ENCODE measurements at regions of chr1 and their contacts with region 1.

Region 1: GRCh38 chr1:180863158-180863775 is 49.4 kb upstream of the KIAA1614 start:
- DNase-seq: peak in 4 of 9 experiments; percentile 11 to 63 (median 42)
- ATAC-seq: no peak
- H3K4me3 ChIP-seq: no peak overlapping the region
- H3K4me3 Mint-ChIP-seq: no peak overlapping the region
- H3K27ac ChIP-seq: no peak overlapping the region
- H3K27ac Mint-ChIP-seq: no peak overlapping the region
- H3K4me1 ChIP-seq: no peaks in the 10 kb centered on the region
- H3K4me1 Mint-ChIP-seq: no peaks in the 10 kb centered on the region
- H3K27me3 ChIP-seq: no peaks in the 10 kb centered on the region
- H3K27me3 Mint-ChIP-seq: no peaks in the 10 kb centered on the region
- CTCF ChIP-seq: peak; percentile 93

Region 2: GRCh38 chr1:180527101-180527669 is 336.1 kb before region 1 on chr1:
- CTCF ChIA-PET with region 1: interaction called, 65 read pairs
- POLR2A ChIA-PET with region 1: no interaction called
- intact Hi-C with region 1: no loop called
- DNase-seq: no peak
- ATAC-seq: no peak
- H3K4me3 ChIP-seq: no peak overlapping the region
- H3K4me3 Mint-ChIP-seq: no peak overlapping the region
- H3K27ac ChIP-seq: no peak overlapping the region
- H3K27ac Mint-ChIP-seq: no peak overlapping the region
- H3K4me1 ChIP-seq: no peaks in the 10 kb centered on the region
- H3K4me1 Mint-ChIP-seq: no peaks in the 10 kb centered on the region
- H3K27me3 ChIP-seq: no peaks in the 10 kb centered on the region
- H3K27me3 Mint-ChIP-seq: no peaks in the 10 kb centered on the region
- CTCF ChIP-seq: no peak

Region 3: GRCh38 chr1:180533266-180533987 is 329.8 kb before region 1 on chr1:
- CTCF ChIA-PET with region 1: interaction called, 65 read pairs
- POLR2A ChIA-PET with region 1: no interaction called
- intact Hi-C with region 1: loop called (anchors 1 kb)
- DNase-seq: peak; percentile 13 to 71 (median 60)
- ATAC-seq: peak; percentile 71
- H3K4me3 ChIP-seq: no peak overlapping the region
- H3K4me3 Mint-ChIP-seq: no peak overlapping the region
- H3K27ac ChIP-seq: no peak overlapping the region
- H3K27ac Mint-ChIP-seq: no peak overlapping the region
- H3K4me1 ChIP-seq: no peaks in the 10 kb centered on the region
- H3K4me1 Mint-ChIP-seq: no peaks in the 10 kb centered on the region
- H3K27me3 ChIP-seq: no peaks in the 10 kb centered on the region
- H3K27me3 Mint-ChIP-seq: peaks cover 7% of the 10 kb centered on the region
- CTCF ChIP-seq: peak; percentile 59

Region 4: DNA sequence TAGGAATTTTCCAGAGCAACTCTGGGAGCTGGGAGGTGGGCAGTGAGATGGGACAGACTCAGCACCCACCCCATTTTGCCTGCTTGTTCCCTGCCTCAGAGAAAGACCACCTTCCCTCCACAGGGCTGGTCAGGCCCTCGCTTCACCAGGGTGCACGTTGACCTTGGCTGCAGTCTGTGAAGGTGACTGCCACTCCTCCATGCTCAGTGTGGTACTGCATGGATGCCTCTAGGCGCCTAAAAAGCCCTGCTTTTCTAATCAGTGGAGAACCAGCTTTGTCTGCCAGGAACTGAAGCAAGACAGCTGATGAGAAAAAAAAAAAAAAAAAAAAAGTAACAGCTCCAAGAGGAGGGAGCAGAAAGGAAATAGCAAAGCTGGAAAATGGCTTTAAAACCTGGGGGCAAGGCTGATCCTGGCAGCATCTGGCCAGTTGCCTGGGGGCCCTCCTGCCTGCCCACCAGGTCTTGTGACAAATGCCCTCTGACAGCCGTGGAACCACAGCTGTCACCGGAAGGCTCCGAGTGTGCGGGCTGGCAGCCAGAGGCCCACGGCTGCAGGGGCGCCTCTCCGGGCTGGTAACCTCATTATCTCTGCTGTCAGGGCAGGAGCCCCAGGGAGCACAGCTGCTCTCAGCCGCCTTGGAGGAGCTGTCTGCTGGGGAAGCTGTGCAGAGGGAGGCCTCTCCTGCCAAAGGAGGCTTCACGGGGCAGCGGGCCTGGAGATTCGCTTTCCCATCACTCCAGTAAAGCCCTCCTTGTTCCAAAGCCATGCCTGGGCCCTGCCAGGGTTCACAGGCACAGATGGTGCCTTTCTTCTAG is 63.1 kb after region 1 on chr1:
- CTCF ChIA-PET with region 1: no interaction called
- POLR2A ChIA-PET with region 1: no interaction called
- intact Hi-C with region 1: no loop called
- DNase-seq: no peak
- ATAC-seq: no peak
- H3K4me3 ChIP-seq: no peak overlapping the region
- H3K4me3 Mint-ChIP-seq: no peak overlapping the region
- H3K27ac ChIP-seq: no peak overlapping the region
- H3K27ac Mint-ChIP-seq: no peak overlapping the region
- H3K4me1 ChIP-seq: no peaks in the 10 kb centered on the region
- H3K4me1 Mint-ChIP-seq: no peaks in the 10 kb centered on the region
- H3K27me3 ChIP-seq: no peaks in the 10 kb centered on the region
- H3K27me3 Mint-ChIP-seq: no peaks in the 10 kb centered on the region
- CTCF ChIP-seq: no peak